Activated CD4-positive, alpha-beta memory T cell treated with anti-CD3 and anti-CD28 coated beads for 36 hours (primary cell): ENCODE measurements at regions of chr2 and their contacts with region 1.

Region 1: DNA sequence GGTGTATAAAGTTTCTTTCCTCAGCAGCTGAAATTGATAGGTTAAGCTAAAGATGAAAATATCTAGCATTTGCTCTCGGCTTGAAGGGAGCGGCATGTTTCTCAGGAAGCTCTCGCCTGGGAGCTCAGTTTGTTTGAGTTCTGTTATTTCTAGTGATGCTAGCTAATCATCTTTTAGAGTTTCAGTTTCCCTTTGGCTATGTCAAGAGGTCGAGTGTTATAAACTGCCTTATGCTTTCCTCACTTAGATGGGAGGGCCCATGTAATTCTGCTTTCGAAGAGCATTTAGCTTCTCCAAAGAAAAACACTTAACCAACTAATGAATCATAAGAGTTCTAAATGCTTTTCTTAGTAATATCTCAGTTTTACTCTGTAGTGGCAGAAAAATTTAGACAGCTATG is 33.6 kb downstream of the PLCL1 start:
- DNase-seq: peak; percentile 41
- H3K4me3 Mint-ChIP-seq: peak overlapping the region; percentile 52
- H3K27ac Mint-ChIP-seq: peak overlapping the region; percentile 71
- H3K4me1 Mint-ChIP-seq: peaks cover 46% of the 10 kb centered on the region
- H3K27me3 Mint-ChIP-seq: no peaks in the 10 kb centered on the region

Region 2: GRCh38 chr2:197425550-197425949 is 412.5 kb before region 1 on chr2:
- CTCF ChIA-PET with region 1: no interaction called
- POLR2A ChIA-PET with region 1: no interaction called
- intact Hi-C with region 1: no loop called
- DNase-seq: no peak
- H3K4me3 Mint-ChIP-seq: no peak overlapping the region
- H3K27ac Mint-ChIP-seq: peak overlapping the region; percentile 50
- H3K4me1 Mint-ChIP-seq: peaks cover 71% of the 10 kb centered on the region
- H3K27me3 Mint-ChIP-seq: no peaks in the 10 kb centered on the region

Region 3: DNA sequence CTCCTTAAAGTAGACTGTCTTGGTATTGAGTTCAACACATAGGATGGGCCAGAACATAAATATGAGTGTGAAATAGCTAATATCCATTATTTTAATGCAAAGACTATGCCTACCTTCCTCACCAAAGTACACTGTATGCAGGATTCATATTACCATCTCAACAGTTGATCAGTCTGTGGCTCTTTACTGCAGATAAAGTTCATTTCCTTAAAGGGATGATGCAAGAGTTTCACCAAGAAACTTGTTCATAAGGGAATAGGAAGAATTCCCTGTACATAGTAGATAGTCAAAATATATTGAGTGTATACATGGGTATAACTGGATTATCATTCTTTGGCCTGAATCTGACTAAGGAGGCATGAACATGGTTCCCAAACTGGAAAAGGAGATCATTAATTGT is 97.8 kb before region 1 on chr2:
- CTCF ChIA-PET with region 1: no interaction called
- POLR2A ChIA-PET with region 1: no interaction called
- intact Hi-C with region 1: no loop called
- DNase-seq: no peak
- H3K4me3 Mint-ChIP-seq: no peak overlapping the region
- H3K27ac Mint-ChIP-seq: no peak overlapping the region
- H3K4me1 Mint-ChIP-seq: no peaks in the 10 kb centered on the region
- H3K27me3 Mint-ChIP-seq: no peaks in the 10 kb centered on the region

Region 4: DNA sequence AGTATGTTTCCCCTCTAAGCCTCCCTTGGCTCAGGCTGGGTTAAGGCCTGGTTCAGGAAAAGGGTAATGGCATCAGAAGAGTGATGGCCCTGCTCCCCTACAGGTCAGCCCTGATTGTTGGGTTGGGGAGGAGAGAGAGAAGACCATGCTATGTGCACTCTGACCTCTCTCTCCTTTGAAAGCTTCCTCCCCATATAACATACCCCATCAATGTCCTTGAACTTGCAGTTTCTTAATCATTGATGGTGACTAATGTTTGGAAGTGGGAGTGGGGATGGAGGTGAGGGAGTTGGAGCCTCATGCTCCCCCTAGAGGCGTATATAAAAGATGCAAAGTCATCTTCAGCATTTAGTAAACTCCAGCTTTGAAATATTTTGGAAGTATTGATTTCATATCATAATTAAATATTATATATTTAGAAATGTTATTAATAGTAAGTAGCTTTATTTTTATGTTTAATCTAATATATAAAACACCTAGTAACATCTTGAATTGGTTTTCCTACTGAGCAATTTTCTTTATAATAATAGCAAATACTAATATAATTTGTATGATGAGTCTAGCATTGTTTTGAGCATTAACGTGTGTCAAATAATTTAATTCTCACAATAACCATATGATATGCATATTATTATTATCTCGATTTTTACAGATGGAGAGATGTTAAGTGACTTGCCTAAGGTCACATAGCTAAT is 24.8 kb before region 1 on chr2:
- CTCF ChIA-PET with region 1: interaction called, 26 read pairs
- POLR2A ChIA-PET with region 1: no interaction called
- intact Hi-C with region 1: loop called (anchors 2 kb)
- DNase-seq: no peak
- H3K4me3 Mint-ChIP-seq: no peak overlapping the region
- H3K27ac Mint-ChIP-seq: no peak overlapping the region
- H3K4me1 Mint-ChIP-seq: peaks cover 28% of the 10 kb centered on the region
- H3K27me3 Mint-ChIP-seq: no peaks in the 10 kb centered on the region

Region 5: GRCh38 chr2:197851451-197851850 is 13.4 kb after region 1 on chr2:
- CTCF ChIA-PET with region 1: interaction called, 7 read pairs
- POLR2A ChIA-PET with region 1: interaction called, 4 read pairs
- intact Hi-C with region 1: loop called (anchors 1 kb)
- DNase-seq: no peak
- H3K4me3 Mint-ChIP-seq: no peak overlapping the region
- H3K27ac Mint-ChIP-seq: no peak overlapping the region
- H3K4me1 Mint-ChIP-seq: peaks cover 56% of the 10 kb centered on the region
- H3K27me3 Mint-ChIP-seq: no peaks in the 10 kb centered on the region

Region 6: DNA sequence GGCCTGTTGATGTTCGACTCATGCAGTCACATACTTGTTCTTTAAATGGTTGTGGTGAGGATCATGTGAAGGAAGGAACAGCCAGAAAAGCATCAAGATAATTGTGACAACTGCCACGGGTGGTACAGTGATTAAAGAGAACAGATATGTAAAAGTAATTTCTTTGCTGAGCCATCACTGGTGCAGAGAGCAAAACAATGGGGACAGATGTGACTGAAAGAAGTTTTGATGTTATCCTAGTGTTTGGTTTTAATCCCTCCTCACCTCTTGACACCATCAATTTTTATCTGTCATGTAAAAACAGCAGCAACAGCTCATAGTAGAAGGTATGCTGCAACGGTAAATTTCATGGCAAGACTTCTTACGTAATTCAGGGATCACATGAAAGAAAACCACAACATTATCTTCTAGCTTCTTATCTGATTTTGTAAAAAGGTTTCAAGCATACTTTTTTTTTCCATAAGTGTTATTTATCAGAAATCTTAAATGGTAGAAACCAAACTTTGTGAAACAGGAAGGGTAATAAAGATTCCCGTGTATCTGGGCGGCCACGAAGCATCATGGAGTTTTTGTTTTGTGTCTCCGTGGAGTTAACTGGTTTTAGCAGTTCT is 31.6 kb after region 1 on chr2:
- CTCF ChIA-PET with region 1: no interaction called
- POLR2A ChIA-PET with region 1: interaction called, 3 read pairs
- intact Hi-C with region 1: loop called (anchors 1 kb)
- DNase-seq: peak; percentile 48
- H3K4me3 Mint-ChIP-seq: peak overlapping the region; percentile 68
- H3K27ac Mint-ChIP-seq: peak overlapping the region; percentile 88
- H3K4me1 Mint-ChIP-seq: peaks cover 57% of the 10 kb centered on the region
- H3K27me3 Mint-ChIP-seq: no peaks in the 10 kb centered on the region

Region 7: DNA sequence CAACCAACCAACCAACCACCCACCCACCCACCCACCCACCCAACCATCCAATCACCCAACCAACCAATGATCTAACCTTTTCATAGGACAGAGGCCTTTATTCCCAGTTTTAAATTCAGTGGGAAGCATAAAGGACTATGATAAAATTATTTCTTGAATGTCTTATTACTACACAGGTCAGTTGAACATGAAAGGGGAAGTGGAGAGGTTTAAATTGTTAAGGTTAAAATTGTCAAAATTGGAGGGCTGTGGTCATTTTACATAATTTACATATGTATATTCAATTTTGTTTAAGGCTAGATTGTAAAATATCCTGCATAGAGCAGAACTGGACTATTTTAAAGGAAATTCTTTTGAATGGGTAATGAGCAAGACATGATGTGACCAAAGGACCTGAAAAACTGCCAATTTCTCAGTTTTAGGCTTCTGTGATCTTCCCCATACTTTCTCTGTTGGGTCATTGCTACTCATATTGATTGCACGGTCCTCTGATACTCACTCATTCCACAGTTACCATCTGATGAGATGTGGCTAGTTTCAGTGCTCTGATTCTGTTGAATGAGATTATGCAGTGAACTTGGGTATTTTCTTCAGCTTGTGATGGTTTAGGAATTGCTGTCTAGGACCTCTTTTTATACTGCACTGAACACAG is 93.8 kb after region 1 on chr2:
- CTCF ChIA-PET with region 1: no interaction called
- POLR2A ChIA-PET with region 1: no interaction called
- intact Hi-C with region 1: loop called (anchors 2 kb)
- DNase-seq: no peak
- H3K4me3 Mint-ChIP-seq: no peak overlapping the region
- H3K27ac Mint-ChIP-seq: no peak overlapping the region
- H3K4me1 Mint-ChIP-seq: peaks cover 46% of the 10 kb centered on the region
- H3K27me3 Mint-ChIP-seq: no peaks in the 10 kb centered on the region

Region 8: GRCh38 chr2:198004921-198005829 is 167.1 kb after region 1 on chr2:
- CTCF ChIA-PET with region 1: interaction called, 3 read pairs
- POLR2A ChIA-PET with region 1: no interaction called
- intact Hi-C with region 1: loop called (anchors 1 kb)
- DNase-seq: peak; percentile 62
- H3K4me3 Mint-ChIP-seq: peak overlapping the region; percentile 61
- H3K27ac Mint-ChIP-seq: peak overlapping the region; percentile 84
- H3K4me1 Mint-ChIP-seq: peaks cover 56% of the 10 kb centered on the region
- H3K27me3 Mint-ChIP-seq: no peaks in the 10 kb centered on the region

Region 9: DNA sequence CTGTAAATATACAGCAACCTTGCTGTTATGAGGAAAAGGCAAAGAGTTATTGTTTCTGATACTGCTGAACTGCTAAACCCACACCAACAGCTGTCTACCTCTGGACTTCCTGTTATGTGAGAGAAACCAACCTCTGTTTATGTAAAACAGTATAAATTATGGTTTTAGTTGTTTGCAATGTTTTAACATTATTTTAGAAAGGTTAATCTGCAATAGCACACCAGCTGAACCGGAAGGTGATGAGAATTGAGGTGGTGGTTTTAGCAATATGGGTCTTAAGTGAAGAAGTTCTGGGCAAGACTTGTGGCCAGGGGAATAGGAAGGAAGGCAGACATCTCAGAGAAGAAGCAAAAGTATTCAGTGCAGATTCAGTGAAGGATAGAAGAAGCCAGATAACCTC is 204.2 kb after region 1 on chr2:
- CTCF ChIA-PET with region 1: interaction called, 3 read pairs
- POLR2A ChIA-PET with region 1: no interaction called
- intact Hi-C with region 1: loop called (anchors 1 kb)
- DNase-seq: no peak
- H3K4me3 Mint-ChIP-seq: no peak overlapping the region
- H3K27ac Mint-ChIP-seq: no peak overlapping the region
- H3K4me1 Mint-ChIP-seq: peaks cover 24% of the 10 kb centered on the region
- H3K27me3 Mint-ChIP-seq: no peaks in the 10 kb centered on the region